ENCODE measurements at regions of chr5 and their contacts with region 1.

Region 1: GRCh38 chr5:17132444-17133083 is 84.9 kb upstream of the BASP1 start:
- DNase-seq: peak; percentile 20 to 63 (median 30)
- H3K4me3 ChIP-seq: no peak overlapping the region
- H3K4me3 Mint-ChIP-seq: no peak overlapping the region
- H3K27ac ChIP-seq: no peak overlapping the region
- H3K27ac Mint-ChIP-seq: no peak overlapping the region
- H3K4me1 ChIP-seq: peaks cover 8 to 11% of the 10 kb centered on the region in 2 donors
- H3K4me1 Mint-ChIP-seq: peaks cover 23% of the 10 kb centered on the region
- H3K27me3 ChIP-seq: peaks cover 17% of the 10 kb centered on the region in 2 donors
- H3K27me3 Mint-ChIP-seq: peaks cover 24 to 29% (median 27%) of the 10 kb centered on the region in 3 donors
- CTCF ChIP-seq: peak; percentile 87

Region 2: DNA sequence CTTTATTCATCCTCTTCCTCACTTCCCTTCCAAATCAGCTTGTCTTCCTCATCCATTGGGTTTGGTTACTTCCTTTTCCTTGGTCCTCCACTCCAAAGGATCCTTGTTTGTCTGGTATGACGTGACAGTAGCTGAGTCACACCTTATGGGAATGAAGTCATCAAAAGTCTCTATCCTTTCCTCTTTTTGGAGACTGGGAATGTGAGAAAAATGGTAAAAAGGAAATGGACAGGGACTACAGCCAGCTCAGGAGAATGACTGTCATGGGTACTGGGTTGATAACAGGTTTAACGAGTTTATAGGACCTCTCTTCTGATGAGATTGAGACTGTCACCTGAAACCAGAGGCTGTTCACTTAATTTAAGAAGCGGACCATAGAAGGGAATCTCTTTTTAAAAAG is 120.3 kb before region 1 on chr5:
- intact Hi-C with region 1: loop called in 1 of 2 experiments (anchors 10 kb)
- DNase-seq: peak in 2 of 3 donors; percentile 20 to 64
- H3K4me3 ChIP-seq: no peak overlapping the region
- H3K4me3 Mint-ChIP-seq: no peak overlapping the region
- H3K27ac ChIP-seq: no peak overlapping the region
- H3K27ac Mint-ChIP-seq: peak overlapping the region in 3 of 7 donors; percentile 27 to 53 (median 38)
- H3K4me1 ChIP-seq: peaks cover 0 to 9% of the 10 kb centered on the region in 2 donors
- H3K4me1 Mint-ChIP-seq: peaks cover 11% of the 10 kb centered on the region
- H3K27me3 ChIP-seq: no peaks in the 10 kb centered on the region
- H3K27me3 Mint-ChIP-seq: peaks cover 1 to 7% (median 6%) of the 10 kb centered on the region in 3 donors
- CTCF ChIP-seq: no peak

Region 3: DNA sequence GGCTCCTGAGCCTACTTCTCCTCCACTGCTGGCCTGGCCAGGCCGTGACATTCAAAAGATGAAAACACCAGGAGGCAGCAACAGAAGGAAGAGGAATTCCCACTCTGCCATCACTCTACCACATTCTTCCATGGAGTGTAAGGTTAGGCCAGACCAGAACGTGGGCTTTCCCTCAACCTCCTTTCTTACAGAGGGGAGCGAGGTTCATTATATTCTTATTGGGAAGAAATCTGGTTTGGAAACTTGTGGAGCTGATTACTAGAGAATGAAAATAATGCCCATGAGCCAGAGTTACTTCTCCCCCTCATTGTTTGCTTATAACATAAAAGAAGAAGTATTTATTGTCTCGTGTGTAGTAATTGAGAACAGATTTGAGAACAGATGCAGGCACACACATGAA is 51.4 kb before region 1 on chr5:
- intact Hi-C with region 1: loop called (anchors 10 kb)
- DNase-seq: no peak
- H3K4me3 ChIP-seq: no peak overlapping the region
- H3K4me3 Mint-ChIP-seq: no peak overlapping the region
- H3K27ac ChIP-seq: no peak overlapping the region
- H3K27ac Mint-ChIP-seq: no peak overlapping the region
- H3K4me1 ChIP-seq: no peaks in the 10 kb centered on the region
- H3K4me1 Mint-ChIP-seq: peaks cover 3% of the 10 kb centered on the region
- H3K27me3 ChIP-seq: no peaks in the 10 kb centered on the region
- H3K27me3 Mint-ChIP-seq: peaks cover 2 to 11% (median 3%) of the 10 kb centered on the region in 3 donors
- CTCF ChIP-seq: no peak

Region 4: GRCh38 chr5:17355586-17356346 is 223.2 kb after region 1 on chr5:
- intact Hi-C with region 1: no loop called
- DNase-seq: peak; percentile 68 to 94 (median 78)
- H3K4me3 ChIP-seq: no peak overlapping the region
- H3K4me3 Mint-ChIP-seq: no peak overlapping the region
- H3K27ac ChIP-seq: peak overlapping the region in 1 of 2 donors; percentile 72
- H3K27ac Mint-ChIP-seq: peak overlapping the region in 6 of 7 donors; percentile 55 to 94 (median 65)
- H3K4me1 ChIP-seq: peaks cover 12 to 16% of the 10 kb centered on the region in 2 donors
- H3K4me1 Mint-ChIP-seq: peaks cover 25% of the 10 kb centered on the region
- H3K27me3 ChIP-seq: no peaks in the 10 kb centered on the region
- H3K27me3 Mint-ChIP-seq: peaks cover 0 to 7% (median under 1%) of the 10 kb centered on the region in 3 donors
- CTCF ChIP-seq: no peak

Measured in CD14-positive monocyte (primary cell).